IMR-90 (cell line): ENCODE measurements at regions of chr6 and their contacts with region 1.

Region 1: GRCh38 chr6:21587179-21587924 is 6.2 kb upstream of the SOX4 start:
- DNase-seq: peak; percentile 58
- ATAC-seq: peak; percentile 45
- H3K4me3 ChIP-seq: peak overlapping the region; percentile 58
- H3K27ac ChIP-seq: peak overlapping the region; percentile 94
- H3K4me1 ChIP-seq: peaks cover 3% of the 10 kb centered on the region; the same call in 1 of the 2 replicates
- H3K27me3 ChIP-seq: no peaks in the 10 kb centered on the region
- CTCF ChIP-seq: peak; percentile 27; the same call in 1 of the 2 replicates
- POLR2A ChIP-seq: no peak
- RAD21 ChIP-seq: peak; percentile 22; the same call in 1 of the 2 replicates

Region 2: GRCh38 chr6:20647585-20647984 is 939.8 kb before region 1 on chr6:
- CTCF ChIA-PET with region 1: no interaction called
- POLR2A ChIA-PET with region 1: interaction called, 21 read pairs
- dilution Hi-C with region 1: no loop called
- in situ Hi-C with region 1: no loop called
- intact Hi-C with region 1: no loop called
- DNase-seq: no peak
- ATAC-seq: no peak
- H3K4me3 ChIP-seq: no peak overlapping the region
- H3K27ac ChIP-seq: no peak overlapping the region
- H3K4me1 ChIP-seq: peaks cover 2% of the 10 kb centered on the region; the same call in 1 of the 2 replicates
- H3K27me3 ChIP-seq: no peaks in the 10 kb centered on the region
- CTCF ChIP-seq: no peak
- POLR2A ChIP-seq: no peak
- RAD21 ChIP-seq: no peak

Region 3: GRCh38 chr6:20946890-20947289 is 640.5 kb before region 1 on chr6:
- CTCF ChIA-PET with region 1: no interaction called
- POLR2A ChIA-PET with region 1: no interaction called
- dilution Hi-C with region 1: no loop called
- in situ Hi-C with region 1: no loop called
- intact Hi-C with region 1: no loop called
- DNase-seq: no peak
- ATAC-seq: no peak
- H3K4me3 ChIP-seq: no peak overlapping the region
- H3K27ac ChIP-seq: no peak overlapping the region
- H3K4me1 ChIP-seq: 0 out of 2 replicates have a peak, but pooled peaks cover 2% of the 10 kb centered on the region
- H3K27me3 ChIP-seq: no peaks in the 10 kb centered on the region
- CTCF ChIP-seq: no peak
- POLR2A ChIP-seq: no peak
- RAD21 ChIP-seq: no peak

Region 4: DNA sequence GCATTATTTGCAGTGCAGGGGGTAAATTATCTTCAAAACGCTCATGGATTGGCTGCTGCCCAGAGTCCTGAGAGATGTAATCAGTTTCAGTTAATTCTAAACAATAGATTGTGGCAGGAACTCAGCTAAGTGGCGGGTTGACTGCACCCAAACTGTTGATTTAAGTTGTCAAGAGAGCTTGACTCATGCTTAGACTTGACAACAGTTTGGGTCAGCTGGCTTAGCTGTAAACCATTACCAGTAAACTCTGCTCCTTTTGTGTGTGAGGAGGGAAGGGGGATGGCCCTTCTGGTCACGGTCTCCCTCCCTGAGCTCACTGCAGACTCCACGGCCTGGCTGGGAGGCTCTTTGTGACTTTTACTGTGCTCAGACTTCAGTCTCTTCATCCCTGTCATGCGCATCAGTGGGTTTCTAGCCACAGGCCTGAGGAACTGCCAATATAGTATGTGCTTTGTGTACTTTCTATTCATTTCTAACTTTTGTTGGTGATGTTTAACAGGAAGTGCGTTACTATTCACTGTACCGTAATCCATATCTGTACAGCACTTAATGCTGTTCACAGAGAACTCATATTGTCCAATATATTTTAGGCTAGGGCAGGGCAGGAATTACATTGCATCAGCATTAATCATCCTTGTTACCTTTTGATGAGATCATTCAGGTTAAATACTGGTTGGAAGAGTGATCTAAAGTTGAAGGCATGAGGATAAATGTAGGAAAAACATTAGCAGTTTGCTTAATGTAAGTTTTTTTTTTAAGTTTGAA is 564.8 kb before region 1 on chr6:
- CTCF ChIA-PET with region 1: interaction called, 5 read pairs
- POLR2A ChIA-PET with region 1: no interaction called
- dilution Hi-C with region 1: no loop called
- in situ Hi-C with region 1: no loop called
- intact Hi-C with region 1: loop called (anchors 1 kb)
- DNase-seq: peak; percentile 82
- ATAC-seq: peak; percentile 94
- H3K4me3 ChIP-seq: no peak overlapping the region
- H3K27ac ChIP-seq: peak overlapping the region; percentile 80; the same call in 1 of the 2 replicates
- H3K4me1 ChIP-seq: peaks cover 2% of the 10 kb centered on the region; the same call in 1 of the 2 replicates
- H3K27me3 ChIP-seq: no peaks in the 10 kb centered on the region
- CTCF ChIP-seq: no peak
- POLR2A ChIP-seq: no peak
- RAD21 ChIP-seq: no peak

Region 5: GRCh38 chr6:21277601-21278374 is 309.6 kb before region 1 on chr6:
- CTCF ChIA-PET with region 1: no interaction called
- POLR2A ChIA-PET with region 1: no interaction called
- dilution Hi-C with region 1: no loop called
- in situ Hi-C with region 1: no loop called
- intact Hi-C with region 1: no loop called
- DNase-seq: no peak
- ATAC-seq: no peak
- H3K4me3 ChIP-seq: no peak overlapping the region
- H3K27ac ChIP-seq: no peak overlapping the region
- H3K4me1 ChIP-seq: no peaks in the 10 kb centered on the region
- H3K27me3 ChIP-seq: peaks cover 1% of the 10 kb centered on the region; the same call in 1 of the 2 replicates
- CTCF ChIP-seq: no peak
- POLR2A ChIP-seq: no peak
- RAD21 ChIP-seq: no peak

Region 6: DNA sequence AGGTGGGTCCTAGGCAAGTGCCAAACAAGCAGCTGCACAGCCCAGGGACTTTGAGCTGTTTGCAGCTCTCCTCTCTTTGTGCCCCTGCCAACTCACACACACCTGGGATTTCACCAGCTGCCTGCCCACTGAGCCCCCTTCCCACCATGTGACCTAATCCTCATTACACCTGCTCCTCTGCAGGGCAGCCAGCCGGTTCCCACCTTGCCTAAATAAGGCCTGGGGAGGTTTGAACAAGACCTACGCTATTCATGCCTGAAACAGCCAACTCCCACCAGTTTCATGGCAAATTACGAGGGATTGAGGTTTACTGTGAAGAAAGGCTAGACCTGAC is 86.4 kb before region 1 on chr6:
- CTCF ChIA-PET with region 1: no interaction called
- POLR2A ChIA-PET with region 1: no interaction called
- dilution Hi-C with region 1: no loop called
- in situ Hi-C with region 1: no loop called
- intact Hi-C with region 1: no loop called
- DNase-seq: no peak
- ATAC-seq: no peak
- H3K4me3 ChIP-seq: no peak overlapping the region
- H3K27ac ChIP-seq: no peak overlapping the region
- H3K4me1 ChIP-seq: peaks cover under 1% of the 10 kb centered on the region; the same call in 1 of the 2 replicates
- H3K27me3 ChIP-seq: no peaks in the 10 kb centered on the region
- CTCF ChIP-seq: no peak
- POLR2A ChIP-seq: no peak
- RAD21 ChIP-seq: no peak

Region 7: GRCh38 chr6:21780679-21781078 is 193.3 kb after region 1 on chr6:
- CTCF ChIA-PET with region 1: no interaction called
- POLR2A ChIA-PET with region 1: interaction called, 13 read pairs
- dilution Hi-C with region 1: no loop called
- in situ Hi-C with region 1: no loop called
- intact Hi-C with region 1: no loop called
- DNase-seq: no peak
- ATAC-seq: peak; percentile 29; the same call in 1 of the 2 replicates
- H3K4me3 ChIP-seq: no peak overlapping the region
- H3K27ac ChIP-seq: no peak overlapping the region
- H3K4me1 ChIP-seq: peaks cover 5% of the 10 kb centered on the region; the same call in 1 of the 2 replicates
- H3K27me3 ChIP-seq: no peaks in the 10 kb centered on the region
- CTCF ChIP-seq: no peak
- POLR2A ChIP-seq: no peak
- RAD21 ChIP-seq: no peak

Region 8: GRCh38 chr6:22432060-22432459 is 844.7 kb after region 1 on chr6:
- CTCF ChIA-PET with region 1: no interaction called
- POLR2A ChIA-PET with region 1: no interaction called
- dilution Hi-C with region 1: no loop called
- in situ Hi-C with region 1: no loop called
- intact Hi-C with region 1: no loop called
- DNase-seq: no peak
- ATAC-seq: no peak
- H3K4me3 ChIP-seq: no peak overlapping the region
- H3K27ac ChIP-seq: no peak overlapping the region
- H3K4me1 ChIP-seq: no peaks in the 10 kb centered on the region
- H3K27me3 ChIP-seq: no peaks in the 10 kb centered on the region
- CTCF ChIP-seq: no peak
- POLR2A ChIP-seq: no peak
- RAD21 ChIP-seq: no peak